ENCODE measurements at regions of chr10 and their contacts with region 1.

Region 1: DNA sequence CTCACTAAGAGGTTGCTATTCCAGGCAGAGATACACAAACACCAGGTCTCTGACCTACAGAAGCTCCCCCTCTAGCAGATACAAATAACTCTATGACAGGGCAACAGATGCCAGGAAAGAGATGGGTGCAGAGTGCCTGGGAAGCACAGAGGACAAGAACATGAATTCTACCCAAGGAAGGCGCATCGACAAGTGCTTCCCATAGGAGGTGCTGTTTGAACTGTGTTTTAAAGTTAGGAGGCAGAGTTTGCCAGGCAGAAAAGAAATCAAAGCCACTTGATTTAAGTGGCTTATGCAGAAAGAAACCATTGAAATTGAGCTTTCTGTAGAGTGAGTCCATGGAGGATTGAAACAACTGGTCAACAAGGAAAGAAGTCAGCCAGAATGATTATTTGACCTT is 35.3 kb upstream of the EGR2 start:
- DNase-seq: no peak
- ATAC-seq: no peak
- H3K4me3 ChIP-seq: no peak overlapping the region
- H3K27ac ChIP-seq: no peak overlapping the region
- H3K4me1 ChIP-seq: peaks cover 37% of the 10 kb centered on the region
- H3K27me3 ChIP-seq: no peaks in the 10 kb centered on the region
- CTCF ChIP-seq: peak; percentile 7 to 38 (median 27); a peak in 3 of 6 replicates
- EP300 ChIP-seq: no peak
- POLR2A ChIP-seq: no peak
- RAD21 ChIP-seq: peak; percentile 54

Region 2: DNA sequence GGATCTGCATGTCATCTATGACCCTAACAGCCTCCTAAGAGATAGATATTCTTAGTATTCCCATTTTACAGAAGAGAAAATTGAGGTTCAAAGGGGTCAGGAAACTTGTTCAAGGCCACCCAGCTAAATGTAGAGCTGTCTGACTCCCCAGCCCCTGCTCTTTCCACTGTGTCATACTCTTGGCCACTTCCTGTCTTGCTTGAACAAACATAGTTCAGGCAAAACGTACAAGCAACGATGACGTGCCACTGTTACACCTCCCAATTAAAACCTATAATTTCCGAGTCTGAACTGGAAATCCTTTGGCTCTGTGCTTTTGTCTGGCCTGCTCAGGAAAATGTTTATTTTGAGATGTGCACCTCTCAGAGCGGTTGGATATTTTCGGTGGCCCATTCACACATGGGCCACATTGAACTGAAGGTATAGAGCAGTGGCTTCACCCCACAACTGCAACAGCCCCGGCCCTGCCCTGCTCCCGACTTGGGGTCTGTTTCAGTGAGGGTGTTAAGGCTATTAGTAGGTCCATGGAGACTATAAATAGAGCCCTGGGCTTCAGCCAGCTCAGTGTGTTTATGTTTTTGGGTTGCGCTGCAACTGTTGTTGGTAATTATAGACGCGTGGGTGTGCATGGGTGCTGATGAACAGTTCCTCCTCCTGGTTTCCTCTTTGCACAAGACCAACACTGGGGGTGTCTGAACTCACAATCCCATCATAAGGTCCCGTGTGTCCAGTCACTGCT is 219.2 kb before region 1 on chr10:
- CTCF ChIA-PET with region 1: interaction called, 4 read pairs
- POLR2A ChIA-PET with region 1: no interaction called
- RAD21 ChIA-PET with region 1: interaction called, 3 read pairs
- SMC1A ChIA-PET with region 1: interaction called, 12 read pairs
- in situ Hi-C with region 1: no loop called
- intact Hi-C with region 1: no loop called
- DNase-seq: peak; percentile 80
- ATAC-seq: peak; percentile 85
- H3K4me3 ChIP-seq: 0 out of 2 replicates have a peak overlapping the region, but pooled peaks have one; percentile 1
- H3K27ac ChIP-seq: peak overlapping the region; percentile 71
- H3K4me1 ChIP-seq: peaks cover 56% of the 10 kb centered on the region
- H3K27me3 ChIP-seq: no peaks in the 10 kb centered on the region
- CTCF ChIP-seq: no peak
- EP300 ChIP-seq: peak; percentile 75 to 94
- POLR2A ChIP-seq: no peak
- RAD21 ChIP-seq: peak; percentile 29; the same call in 1 of the 2 replicates

Region 3: GRCh38 chr10:62890395-62890794 is 39.0 kb after region 1 on chr10:
- CTCF ChIA-PET with region 1: no interaction called
- POLR2A ChIA-PET with region 1: no interaction called
- RAD21 ChIA-PET with region 1: no interaction called
- SMC1A ChIA-PET with region 1: no interaction called
- in situ Hi-C with region 1: no loop called
- intact Hi-C with region 1: no loop called
- DNase-seq: no peak
- ATAC-seq: no peak
- H3K4me3 ChIP-seq: no peak overlapping the region
- H3K27ac ChIP-seq: no peak overlapping the region
- H3K4me1 ChIP-seq: no peaks in the 10 kb centered on the region
- H3K27me3 ChIP-seq: no peaks in the 10 kb centered on the region; a peak in 1 of 4 replicates
- CTCF ChIP-seq: no peak
- EP300 ChIP-seq: no peak
- POLR2A ChIP-seq: no peak
- RAD21 ChIP-seq: no peak

Region 4: DNA sequence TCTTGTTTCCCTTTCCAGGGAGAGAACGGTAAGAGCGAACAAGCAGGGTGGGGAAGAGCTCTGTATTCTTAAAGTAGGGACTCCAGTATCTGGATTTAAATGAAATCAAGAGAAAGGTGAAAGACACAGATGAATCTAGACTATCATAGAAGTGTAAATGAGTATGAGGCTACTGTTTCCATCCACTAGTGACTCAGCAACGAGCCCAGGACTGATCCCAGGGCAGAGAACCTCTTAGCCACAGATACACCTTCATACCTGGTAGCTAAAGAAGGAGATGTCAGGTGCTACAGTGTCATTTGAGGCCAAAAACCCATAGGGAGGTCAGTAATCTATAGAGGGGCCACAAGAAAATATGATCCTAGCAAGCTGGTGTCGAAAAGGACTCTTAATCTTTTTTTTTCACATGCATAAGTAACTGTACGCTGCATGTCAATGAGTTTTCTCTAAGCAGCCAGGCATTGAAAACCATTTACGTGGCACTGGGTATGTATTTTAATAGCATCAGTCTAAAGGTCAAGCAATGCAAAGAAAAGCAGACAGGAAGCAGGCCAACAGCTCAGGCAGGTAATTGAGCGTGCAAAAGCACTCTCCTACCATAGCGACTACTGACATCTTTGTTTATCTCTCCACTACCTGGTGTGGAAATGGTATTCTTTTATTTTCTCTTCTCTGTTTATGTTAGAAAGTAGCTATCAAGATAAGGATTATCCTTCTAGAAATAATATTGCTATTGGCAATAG is 56.2 kb after region 1 on chr10:
- CTCF ChIA-PET with region 1: interaction called, 3 read pairs
- POLR2A ChIA-PET with region 1: interaction called, 4 read pairs
- RAD21 ChIA-PET with region 1: interaction called, 20 read pairs
- SMC1A ChIA-PET with region 1: interaction called, 18 read pairs
- in situ Hi-C with region 1: no loop called
- intact Hi-C with region 1: no loop called
- DNase-seq: no peak
- ATAC-seq: peak; percentile 55; the same call in 2 of the 3 replicates
- H3K4me3 ChIP-seq: no peak overlapping the region
- H3K27ac ChIP-seq: no peak overlapping the region
- H3K4me1 ChIP-seq: peaks cover 28% of the 10 kb centered on the region
- H3K27me3 ChIP-seq: no peaks in the 10 kb centered on the region
- CTCF ChIP-seq: no peak
- EP300 ChIP-seq: no peak
- POLR2A ChIP-seq: no peak
- RAD21 ChIP-seq: no peak

Region 5: DNA sequence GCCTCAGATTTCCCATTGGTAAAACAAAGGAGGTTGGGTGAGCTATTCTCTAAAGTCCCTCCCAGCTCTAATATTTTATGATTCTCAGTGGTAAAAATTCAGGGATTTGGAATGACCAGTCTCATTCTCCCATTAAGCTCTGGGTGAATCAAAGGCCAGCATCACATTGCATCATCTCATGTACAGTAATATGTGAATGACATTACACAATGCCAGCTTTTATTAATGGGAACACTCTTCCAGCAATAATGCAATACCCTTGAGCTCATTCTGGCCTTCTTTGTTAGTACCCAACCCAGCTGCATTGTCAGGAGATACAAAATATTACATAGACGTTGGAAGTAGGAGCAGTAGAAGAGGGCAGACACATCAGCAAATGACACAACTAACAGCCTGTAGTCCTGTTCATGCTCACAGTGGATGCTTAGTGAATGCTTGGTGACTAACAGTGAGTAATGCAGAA is 64.7 kb after region 1 on chr10:
- CTCF ChIA-PET with region 1: interaction called, 3 read pairs
- POLR2A ChIA-PET with region 1: no interaction called
- RAD21 ChIA-PET with region 1: interaction called, 4 read pairs
- SMC1A ChIA-PET with region 1: interaction called, 15 read pairs
- in situ Hi-C with region 1: no loop called
- intact Hi-C with region 1: no loop called
- DNase-seq: no peak
- ATAC-seq: no peak
- H3K4me3 ChIP-seq: no peak overlapping the region
- H3K27ac ChIP-seq: no peak overlapping the region
- H3K4me1 ChIP-seq: peaks cover 26% of the 10 kb centered on the region
- H3K27me3 ChIP-seq: no peaks in the 10 kb centered on the region
- CTCF ChIP-seq: no peak
- EP300 ChIP-seq: no peak
- POLR2A ChIP-seq: no peak
- RAD21 ChIP-seq: no peak

Region 6: GRCh38 chr10:62992145-62992721 is 140.8 kb after region 1 on chr10:
- CTCF ChIA-PET with region 1: interaction called, 5 read pairs
- POLR2A ChIA-PET with region 1: no interaction called
- RAD21 ChIA-PET with region 1: interaction called, 14 read pairs
- SMC1A ChIA-PET with region 1: interaction called, 13 read pairs
- in situ Hi-C with region 1: no loop called
- intact Hi-C with region 1: loop called (anchors 5 kb)
- DNase-seq: peak; percentile 40
- ATAC-seq: peak; percentile 91
- H3K4me3 ChIP-seq: no peak overlapping the region; the same call in 1 of the 2 replicates
- H3K27ac ChIP-seq: peak overlapping the region; percentile 56
- H3K4me1 ChIP-seq: peaks cover 8% of the 10 kb centered on the region
- H3K27me3 ChIP-seq: no peaks in the 10 kb centered on the region
- CTCF ChIP-seq: no peak
- EP300 ChIP-seq: no peak; a peak in 1 of 4 replicates
- POLR2A ChIP-seq: no peak
- RAD21 ChIP-seq: no peak

Region 7: GRCh38 chr10:63010203-63010602 is 158.8 kb after region 1 on chr10:
- CTCF ChIA-PET with region 1: interaction called, 6 read pairs
- POLR2A ChIA-PET with region 1: no interaction called
- RAD21 ChIA-PET with region 1: interaction called, 3 read pairs
- SMC1A ChIA-PET with region 1: interaction called, 3 read pairs
- in situ Hi-C with region 1: no loop called
- intact Hi-C with region 1: loop called (anchors 1 kb)
- DNase-seq: no peak
- ATAC-seq: no peak
- H3K4me3 ChIP-seq: no peak overlapping the region
- H3K27ac ChIP-seq: no peak overlapping the region
- H3K4me1 ChIP-seq: no peaks in the 10 kb centered on the region
- H3K27me3 ChIP-seq: no peaks in the 10 kb centered on the region
- CTCF ChIP-seq: no peak
- EP300 ChIP-seq: no peak
- POLR2A ChIP-seq: no peak
- RAD21 ChIP-seq: no peak

Region 8: DNA sequence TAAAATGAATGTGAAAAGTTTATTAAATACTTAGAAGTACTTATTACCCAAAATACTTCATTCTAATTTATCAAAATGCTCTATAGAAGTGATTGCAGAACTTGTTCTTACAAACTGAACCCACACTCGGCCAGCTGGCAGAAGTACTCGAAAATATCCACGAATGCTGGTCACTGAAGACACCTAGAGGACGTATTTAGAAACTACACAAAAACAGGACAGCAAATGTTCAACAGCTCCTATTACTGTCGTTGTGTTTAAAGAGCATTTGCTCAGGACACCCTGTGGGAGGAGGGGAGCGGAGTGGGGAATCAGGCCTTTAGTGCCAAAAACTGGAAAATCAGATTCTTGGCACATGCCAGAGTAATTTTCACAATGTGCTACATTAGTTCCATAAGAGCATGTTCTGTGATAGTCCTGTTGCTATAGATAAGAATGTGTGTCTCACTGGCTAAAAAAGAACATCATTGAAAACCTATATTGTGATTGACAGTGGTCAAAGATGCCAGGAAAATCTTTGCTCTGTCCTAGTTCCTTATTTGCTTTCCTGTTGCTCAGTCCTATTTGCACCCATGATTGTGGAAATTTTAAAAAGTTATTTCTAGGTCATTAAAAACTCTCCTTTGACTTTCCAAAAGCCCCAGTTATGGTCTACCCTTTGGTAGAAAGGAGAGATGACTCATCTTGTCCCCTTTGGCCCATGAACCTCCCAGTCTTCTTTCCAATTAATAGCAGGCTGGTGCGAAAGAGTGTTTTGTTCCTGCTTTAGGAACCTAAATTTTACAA is 232.7 kb after region 1 on chr10:
- CTCF ChIA-PET with region 1: interaction called, 7 read pairs
- POLR2A ChIA-PET with region 1: no interaction called
- RAD21 ChIA-PET with region 1: interaction called, 3 read pairs
- SMC1A ChIA-PET with region 1: interaction called, 13 read pairs
- in situ Hi-C with region 1: no loop called
- intact Hi-C with region 1: no loop called
- DNase-seq: peak; percentile 38
- ATAC-seq: peak; percentile 94
- H3K4me3 ChIP-seq: no peak overlapping the region
- H3K27ac ChIP-seq: no peak overlapping the region
- H3K4me1 ChIP-seq: no peaks in the 10 kb centered on the region
- H3K27me3 ChIP-seq: no peaks in the 10 kb centered on the region; a peak in 1 of 4 replicates
- CTCF ChIP-seq: peak; percentile 63 to 84 (median 76)
- EP300 ChIP-seq: no peak
- POLR2A ChIP-seq: no peak
- RAD21 ChIP-seq: peak; percentile 99